BJ (cell line): ENCODE measurements at regions of chr3 and their contacts with region 1.

Region 1: GRCh38 chr3:42190701-42191462 is 75.1 kb downstream of the CCK start:
- DNase-seq: no peak
- H3K4me3 ChIP-seq: no peak overlapping the region
- H3K27me3 ChIP-seq: no peaks in the 10 kb centered on the region
- CTCF ChIP-seq: peak; percentile 89

Region 2: GRCh38 chr3:41893977-41894376 is 296.9 kb before region 1 on chr3:
- CTCF ChIA-PET with region 1: interaction called, 32 read pairs
- POLR2A ChIA-PET with region 1: no interaction called
- DNase-seq: no peak
- H3K4me3 ChIP-seq: no peak overlapping the region
- H3K27me3 ChIP-seq: no peaks in the 10 kb centered on the region
- CTCF ChIP-seq: peak; percentile 46

Region 3: DNA sequence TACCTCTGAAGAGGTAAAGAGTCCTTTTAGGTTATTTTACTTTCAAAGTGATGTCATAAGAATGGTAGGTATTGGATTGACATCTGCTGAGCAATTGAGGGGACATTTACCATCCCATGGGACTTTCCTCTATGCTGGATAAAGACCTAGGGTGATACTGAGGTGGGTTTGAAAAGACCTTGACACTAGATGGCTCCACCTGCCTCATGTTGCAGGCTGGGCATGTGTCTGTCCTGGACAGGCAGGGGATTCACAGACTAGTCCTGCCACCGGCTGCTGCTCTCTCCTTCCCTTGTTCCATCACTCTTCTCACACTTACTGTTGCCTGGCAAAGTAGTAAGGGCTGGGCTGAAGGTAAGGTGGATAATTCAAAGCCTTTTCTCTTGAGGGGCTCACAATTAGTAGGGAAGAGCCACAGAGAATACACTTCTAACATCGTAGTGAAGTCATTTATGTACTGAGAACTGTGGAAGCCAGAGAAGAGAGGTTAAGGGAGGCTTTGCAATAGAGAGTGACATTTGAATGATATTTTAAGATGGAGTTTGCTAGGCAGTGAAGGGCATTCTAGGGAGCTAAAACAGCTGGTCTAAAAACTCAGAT is 72.0 kb before region 1 on chr3:
- CTCF ChIA-PET with region 1: interaction called, 40 read pairs
- POLR2A ChIA-PET with region 1: no interaction called
- DNase-seq: no peak
- H3K4me3 ChIP-seq: no peak overlapping the region
- H3K27me3 ChIP-seq: no peaks in the 10 kb centered on the region
- CTCF ChIP-seq: peak; percentile 45

Region 4: DNA sequence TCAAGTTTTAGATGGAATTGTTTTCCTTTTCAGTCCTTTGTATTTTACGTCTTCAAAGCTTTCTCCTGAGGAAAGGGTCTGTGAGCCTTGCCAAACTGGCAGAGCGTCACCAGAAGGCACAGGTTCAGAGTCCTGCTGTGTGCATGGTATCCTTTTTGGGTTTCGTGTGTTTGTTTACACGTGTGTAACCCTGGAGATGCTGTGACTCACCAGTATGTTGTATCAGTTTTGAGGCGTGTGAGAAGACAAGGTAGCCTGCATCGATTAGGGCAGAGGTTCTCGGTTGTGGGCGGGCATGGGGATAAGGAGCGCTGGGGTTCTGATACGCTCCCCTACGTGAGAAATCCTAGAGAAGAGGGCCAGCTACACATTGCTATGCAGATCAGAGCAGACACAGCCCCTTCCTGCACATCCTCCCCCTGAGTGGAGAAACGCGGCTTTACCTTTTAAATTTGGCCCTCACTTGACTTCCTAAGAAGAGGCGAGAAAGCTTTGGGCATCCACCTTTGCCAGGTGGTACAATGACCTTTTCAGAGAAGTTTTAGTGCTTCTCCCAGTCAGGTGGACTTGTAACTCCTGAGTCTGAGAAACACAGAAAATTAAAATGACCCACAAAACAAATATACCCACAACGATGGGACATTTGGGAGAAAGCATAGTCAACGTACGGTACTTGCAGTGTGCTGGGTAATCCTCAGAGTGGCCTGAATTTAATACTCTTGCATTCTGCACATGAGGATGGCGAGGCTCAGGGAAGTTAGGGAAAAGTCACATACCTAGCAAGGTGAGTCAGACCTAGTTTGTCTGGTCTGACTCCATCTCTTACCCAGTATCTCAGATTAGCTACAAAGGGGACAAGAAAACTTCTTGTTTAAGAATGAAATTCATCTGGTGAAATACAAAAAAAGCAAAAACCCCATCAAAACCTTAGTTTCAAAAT is 61.6 kb before region 1 on chr3:
- CTCF ChIA-PET with region 1: interaction called, 16 read pairs
- POLR2A ChIA-PET with region 1: no interaction called
- DNase-seq: no peak
- H3K4me3 ChIP-seq: no peak overlapping the region
- H3K27me3 ChIP-seq: no peaks in the 10 kb centered on the region
- CTCF ChIP-seq: no peak

Region 5: DNA sequence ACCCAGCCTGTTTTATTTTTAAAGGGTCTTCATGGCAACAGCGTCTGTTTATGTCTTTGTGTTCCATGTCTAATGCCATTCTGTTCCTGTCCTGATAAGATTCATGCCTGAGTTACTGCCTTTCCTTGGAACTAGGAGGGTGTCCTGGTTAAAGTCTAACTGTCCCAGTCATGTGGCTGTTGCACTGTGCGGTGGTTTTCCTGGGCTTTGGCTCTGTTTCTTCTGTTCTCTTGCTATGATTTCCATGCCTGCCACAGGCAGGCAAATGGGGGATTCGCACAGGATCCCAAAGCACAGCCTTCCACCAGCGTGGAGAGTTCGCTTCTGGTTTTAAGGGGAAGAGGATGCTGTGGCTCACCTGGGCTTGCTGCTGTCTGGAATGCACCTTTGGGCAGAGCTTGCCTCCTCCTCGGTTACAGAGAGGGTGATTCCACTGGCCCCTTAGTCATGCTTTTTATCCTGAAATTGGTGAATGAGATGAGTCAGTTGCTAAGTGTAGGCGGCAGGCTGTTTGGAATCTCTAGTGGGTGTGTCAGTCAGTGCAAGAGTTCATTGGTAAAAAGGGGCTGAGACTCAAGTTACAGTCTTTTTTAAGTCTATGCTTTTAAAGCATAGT is 11.7 kb before region 1 on chr3:
- CTCF ChIA-PET with region 1: interaction called, 50 read pairs
- POLR2A ChIA-PET with region 1: no interaction called
- DNase-seq: peak; percentile 82
- H3K4me3 ChIP-seq: no peak overlapping the region
- H3K27me3 ChIP-seq: no peaks in the 10 kb centered on the region
- CTCF ChIP-seq: no peak

Region 6: DNA sequence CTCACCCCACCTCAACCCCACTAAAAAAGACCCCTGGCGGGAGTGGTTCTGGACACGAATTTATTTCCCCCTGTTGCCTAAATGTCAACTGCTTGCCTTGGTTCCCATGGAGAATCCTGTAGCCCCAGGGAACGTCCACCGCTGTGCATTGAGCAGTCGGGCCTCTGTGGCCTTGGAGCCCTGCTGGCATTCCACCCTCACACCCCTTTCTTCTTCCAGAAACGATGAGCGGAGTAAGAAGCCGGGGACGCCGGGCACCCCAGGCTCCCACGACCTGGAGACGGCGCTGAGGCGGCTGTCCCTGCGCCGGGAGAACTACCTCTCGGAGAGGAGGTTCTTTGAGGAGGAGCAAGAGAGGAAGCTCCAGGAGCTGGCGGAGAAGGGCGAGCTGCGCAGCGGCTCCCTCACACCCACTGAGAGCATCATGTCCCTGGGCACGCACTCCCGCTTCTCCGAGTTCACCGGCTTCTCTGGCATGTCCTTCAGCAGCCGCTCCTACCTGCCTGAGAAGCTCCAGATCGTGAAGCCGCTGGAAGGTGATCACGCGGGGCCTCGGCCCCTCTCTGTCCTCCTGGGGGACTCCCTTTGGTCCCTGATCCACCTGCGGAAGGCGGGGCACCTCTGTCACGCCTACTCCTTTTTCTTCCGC is 11.5 kb after region 1 on chr3:
- CTCF ChIA-PET with region 1: interaction called, 20 read pairs
- POLR2A ChIA-PET with region 1: no interaction called
- DNase-seq: no peak
- H3K4me3 ChIP-seq: no peak overlapping the region
- H3K27me3 ChIP-seq: no peaks in the 10 kb centered on the region
- CTCF ChIP-seq: no peak

Region 7: DNA sequence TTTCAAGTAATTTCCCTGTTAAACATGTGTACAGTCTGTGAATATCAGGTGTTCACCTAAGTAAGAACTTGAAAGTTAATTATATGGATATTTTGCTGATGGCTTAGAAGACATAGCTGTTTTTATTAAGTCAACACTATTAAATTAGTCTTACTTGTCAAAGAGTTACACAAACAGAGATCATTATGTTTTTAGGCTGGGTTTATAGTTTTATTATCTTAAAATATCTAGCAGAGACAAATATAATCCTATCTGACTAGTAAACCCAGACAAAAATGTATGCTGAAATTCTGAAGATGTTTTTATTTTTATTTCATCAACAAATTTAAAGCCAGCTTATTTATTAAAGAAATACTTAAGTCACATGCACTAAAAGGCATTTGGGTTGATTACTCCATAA is 126.3 kb after region 1 on chr3:
- CTCF ChIA-PET with region 1: no interaction called
- POLR2A ChIA-PET with region 1: no interaction called
- DNase-seq: no peak
- H3K4me3 ChIP-seq: no peak overlapping the region
- H3K27me3 ChIP-seq: no peaks in the 10 kb centered on the region
- CTCF ChIP-seq: no peak